GM13977 (cell line): ENCODE measurements at regions of chr5 and their contacts with region 1.

Region 1: GRCh38 chr5:122515709-122516431 is 203.8 kb downstream of the SNCAIP start:
- DNase-seq: peak; percentile 57
- CTCF ChIP-seq: peak; percentile 68

Region 2: DNA sequence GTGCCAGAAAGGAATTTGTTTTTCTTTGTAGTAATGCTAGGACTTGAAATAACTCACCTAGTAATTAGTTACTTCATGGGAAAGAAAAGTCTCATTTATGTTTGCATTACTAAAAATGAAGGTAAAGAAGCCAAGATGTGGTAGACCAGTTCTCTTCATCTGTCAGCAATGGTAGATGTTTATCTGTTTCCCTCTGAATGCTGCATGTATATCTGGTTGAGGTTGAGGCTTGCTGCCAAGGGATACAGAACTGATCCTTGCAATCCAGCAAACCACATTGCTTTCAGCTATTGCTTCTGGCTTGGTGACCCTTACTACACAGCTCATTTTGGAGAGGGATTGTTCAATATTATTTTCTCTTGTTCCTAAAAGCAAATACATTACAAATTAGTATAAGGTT is 312.9 kb before region 1 on chr5:
- in situ Hi-C with region 1: no loop called
- DNase-seq: no peak
- CTCF ChIP-seq: no peak

Region 3: DNA sequence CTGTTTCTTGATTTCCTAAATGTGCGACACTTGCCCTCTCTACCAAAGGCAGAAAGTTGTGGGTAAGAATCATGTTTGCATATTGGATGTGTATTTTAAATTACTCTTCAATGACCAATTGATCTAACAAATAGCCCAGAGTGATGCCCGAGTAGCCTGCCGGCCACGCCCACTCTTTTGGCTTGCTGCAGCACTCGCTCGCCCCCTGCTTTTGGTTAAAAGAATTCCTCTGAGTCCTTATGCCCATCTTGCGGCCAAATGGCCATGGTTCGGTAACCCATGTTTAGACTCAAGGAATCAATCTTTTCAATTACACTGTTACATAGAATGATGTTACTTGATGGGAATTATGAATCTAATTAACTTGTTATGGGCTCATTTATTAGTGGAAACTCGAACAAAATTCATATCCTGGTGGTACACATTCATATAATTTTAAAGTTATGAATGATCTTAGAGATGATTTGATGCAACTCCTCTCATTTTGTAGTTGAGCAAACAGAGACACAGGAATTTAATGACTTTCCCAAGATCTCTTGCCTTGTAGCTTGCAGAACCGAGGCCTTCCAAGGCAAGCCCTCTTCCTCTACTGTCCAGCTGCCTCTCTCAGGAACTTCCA is 484.2 kb after region 1 on chr5:
- in situ Hi-C with region 1: loop called (anchors 25 kb)
- DNase-seq: peak; percentile 58
- CTCF ChIP-seq: peak; percentile 62

Region 4: GRCh38 chr5:123610665-123611405 is 1095.0 kb after region 1 on chr5:
- in situ Hi-C with region 1: loop called (anchors 25 kb)
- DNase-seq: peak; percentile 30
- CTCF ChIP-seq: peak; percentile 83